ENCODE measurements at regions of chr5 and their contacts with region 1.

Region 1: GRCh38 chr5:87300744-87301143 is 33.1 kb downstream of the RASA1 start:
- DNase-seq: no peak
- H3K4me3 ChIP-seq: no peak overlapping the region
- H3K27ac ChIP-seq: no peak overlapping the region
- H3K4me1 ChIP-seq: peaks cover 0 to 6% of the 10 kb centered on the region in 2 donors
- H3K27me3 ChIP-seq: no peaks in the 10 kb centered on the region
- CTCF ChIP-seq: no peak
- POLR2A ChIP-seq: no peak

Region 2: DNA sequence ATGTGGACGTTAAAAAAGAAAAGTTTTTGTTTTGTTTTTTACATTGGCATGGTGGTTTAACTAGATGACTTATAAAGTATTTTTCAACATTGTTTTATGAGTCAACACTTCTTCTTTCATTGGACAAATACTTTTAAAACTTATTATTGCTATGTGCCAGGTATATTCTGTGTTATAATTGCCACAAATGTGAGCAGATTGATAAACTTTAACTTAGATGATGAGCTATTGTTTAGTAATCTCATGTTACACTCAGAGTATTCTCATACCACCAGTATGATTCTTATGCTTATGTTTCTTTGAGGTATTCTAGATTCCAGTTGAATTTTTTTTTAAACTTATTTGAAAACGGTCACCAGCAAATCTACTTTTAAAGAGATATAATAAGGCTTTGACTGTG is 27.3 kb after region 1 on chr5:
- intact Hi-C with region 1: loop called (anchors 2 kb)
- DNase-seq: no peak
- H3K4me3 ChIP-seq: no peak overlapping the region
- H3K27ac ChIP-seq: no peak overlapping the region
- H3K4me1 ChIP-seq: no peaks in the 10 kb centered on the region
- H3K27me3 ChIP-seq: no peaks in the 10 kb centered on the region
- CTCF ChIP-seq: no peak
- POLR2A ChIP-seq: no peak